Naive thymus-derived CD4-positive, alpha-beta T cell (primary cell): ENCODE measurements at regions of chr17 and their contacts with region 1.

Region 1: DNA sequence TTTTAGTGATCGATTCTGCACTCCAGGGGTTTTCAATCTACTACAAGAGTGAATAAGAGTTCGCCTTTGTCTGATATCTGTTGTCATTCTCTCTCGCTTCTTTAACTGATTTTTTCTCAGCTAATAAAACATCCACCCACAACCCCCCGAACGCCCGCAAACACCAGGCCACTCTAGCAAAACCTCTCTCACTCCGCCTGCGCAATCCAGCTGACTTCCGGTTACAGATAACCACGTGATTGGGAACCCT is 338 bp upstream of the RPL19 start:
- DNase-seq: peak in 7 of 9 donors; percentile 61 to 93 (median 89)
- ATAC-seq: peak; percentile 85
- H3K4me3 ChIP-seq: peak overlapping the region; percentile 83
- H3K4me3 Mint-ChIP-seq: peak overlapping the region; percentile 87 to 98 (median 92)
- H3K27ac ChIP-seq: peak overlapping the region; percentile 98
- H3K27ac Mint-ChIP-seq: peak overlapping the region; percentile 93 to 100 (median 99)
- H3K4me1 ChIP-seq: peaks cover 42 to 46% of the 10 kb centered on the region in 2 donors
- H3K4me1 Mint-ChIP-seq: peaks cover 38 to 72% (median 54%) of the 10 kb centered on the region in 7 donors
- H3K27me3 ChIP-seq: no peaks in the 10 kb centered on the region
- H3K27me3 Mint-ChIP-seq: no peaks in the 10 kb centered on the region

Region 2: GRCh38 chr17:39126436-39126835 is 73.3 kb before region 1 on chr17:
- CTCF ChIA-PET with region 1: no interaction called
- POLR2A ChIA-PET with region 1: no interaction called
- intact Hi-C with region 1: no loop called
- DNase-seq: no peak
- ATAC-seq: no peak
- H3K4me3 ChIP-seq: no peak overlapping the region
- H3K4me3 Mint-ChIP-seq: no peak overlapping the region
- H3K27ac ChIP-seq: no peak overlapping the region
- H3K27ac Mint-ChIP-seq: no peak overlapping the region
- H3K4me1 ChIP-seq: no peaks in the 10 kb centered on the region
- H3K4me1 Mint-ChIP-seq: peaks cover 0 to 2% (median 0%) of the 10 kb centered on the region in 7 donors
- H3K27me3 ChIP-seq: no peaks in the 10 kb centered on the region
- H3K27me3 Mint-ChIP-seq: no peaks in the 10 kb centered on the region

Region 3: GRCh38 chr17:39235555-39236449 is 36.1 kb after region 1 on chr17:
- CTCF ChIA-PET with region 1: interaction called, 285 read pairs
- POLR2A ChIA-PET with region 1: interaction called, 144 read pairs
- intact Hi-C with region 1: no loop called
- DNase-seq: peak in 7 of 9 donors; percentile 35 to 62 (median 51)
- ATAC-seq: peak; percentile 57
- H3K4me3 ChIP-seq: no peak overlapping the region
- H3K4me3 Mint-ChIP-seq: peak overlapping the region in 4 of 10 donors; percentile 0 to 51 (median 8)
- H3K27ac ChIP-seq: no peak overlapping the region
- H3K27ac Mint-ChIP-seq: peak overlapping the region in 8 of 9 donors; percentile 21 to 89 (median 76)
- H3K4me1 ChIP-seq: peaks cover 33 to 43% of the 10 kb centered on the region in 2 donors
- H3K4me1 Mint-ChIP-seq: peaks cover 20 to 45% (median 40%) of the 10 kb centered on the region in 7 donors
- H3K27me3 ChIP-seq: no peaks in the 10 kb centered on the region
- H3K27me3 Mint-ChIP-seq: peaks cover 0 to 13% (median 9%) of the 10 kb centered on the region in 5 donors

Region 4: DNA sequence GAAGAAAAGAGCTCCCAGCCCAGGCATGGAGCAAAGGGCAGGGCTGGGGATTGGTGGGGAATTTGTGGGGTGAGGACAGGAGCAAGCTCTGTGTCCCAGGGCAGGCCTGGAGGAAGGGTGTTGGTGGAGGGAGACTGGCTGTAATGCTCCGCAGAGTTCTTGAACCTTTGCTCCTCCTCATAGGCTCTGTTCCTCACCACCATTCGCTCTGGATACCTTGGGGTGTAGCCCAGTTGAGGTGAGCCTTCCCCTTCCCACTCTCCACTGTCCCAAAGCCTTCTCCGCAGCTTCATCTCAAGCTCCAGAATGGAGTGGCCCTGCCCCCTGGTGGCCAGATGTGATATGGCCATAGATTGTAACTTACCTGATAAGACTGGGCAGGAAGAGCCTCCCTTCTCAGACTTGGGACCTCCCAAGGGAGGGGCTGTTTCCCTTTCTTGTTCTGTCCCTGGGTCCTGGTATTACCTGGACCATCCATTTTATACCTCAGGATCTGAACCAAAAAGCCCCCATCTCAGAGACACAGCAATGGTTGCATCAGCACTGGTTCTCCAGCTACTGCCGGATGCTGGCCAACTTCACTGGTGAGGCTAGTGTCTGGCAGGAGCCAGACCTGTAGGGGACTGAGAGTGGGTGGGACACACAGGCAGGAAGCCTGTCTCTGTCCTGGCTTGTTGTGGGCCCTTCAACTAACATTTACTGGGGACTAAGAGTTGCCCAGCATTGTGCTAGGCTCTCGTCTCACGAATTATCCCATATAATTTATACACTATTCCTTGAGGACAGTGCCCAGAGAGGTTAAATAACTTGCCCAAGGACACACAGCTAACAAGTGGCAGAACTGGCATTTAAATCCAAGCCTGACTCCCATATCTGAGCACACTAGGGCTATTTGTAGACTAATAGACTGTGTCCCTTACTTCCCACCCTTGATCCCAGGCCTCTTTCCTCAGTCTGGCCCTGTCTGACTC is 45.1 kb after region 1 on chr17:
- CTCF ChIA-PET with region 1: interaction called, 285 read pairs
- POLR2A ChIA-PET with region 1: interaction called, 144 read pairs
- intact Hi-C with region 1: no loop called
- DNase-seq: peak; percentile 74 to 85 (median 81)
- ATAC-seq: peak; percentile 96
- H3K4me3 ChIP-seq: no peak overlapping the region
- H3K4me3 Mint-ChIP-seq: peak overlapping the region in 5 of 10 donors; percentile 12 to 61 (median 38)
- H3K27ac ChIP-seq: no peak overlapping the region
- H3K27ac Mint-ChIP-seq: peak overlapping the region in 6 of 9 donors; percentile 5 to 87 (median 66)
- H3K4me1 ChIP-seq: peaks cover 6 to 10% of the 10 kb centered on the region in 2 donors
- H3K4me1 Mint-ChIP-seq: peaks cover 7 to 16% (median 11%) of the 10 kb centered on the region in 7 donors
- H3K27me3 ChIP-seq: no peaks in the 10 kb centered on the region
- H3K27me3 Mint-ChIP-seq: peaks cover 0 to 4% (median 0%) of the 10 kb centered on the region in 5 donors

Region 5: GRCh38 chr17:39270923-39271322 is 71.2 kb after region 1 on chr17:
- CTCF ChIA-PET with region 1: no interaction called
- POLR2A ChIA-PET with region 1: no interaction called
- intact Hi-C with region 1: no loop called
- DNase-seq: no peak
- ATAC-seq: no peak
- H3K4me3 ChIP-seq: no peak overlapping the region
- H3K4me3 Mint-ChIP-seq: no peak overlapping the region
- H3K27ac ChIP-seq: no peak overlapping the region
- H3K27ac Mint-ChIP-seq: no peak overlapping the region
- H3K4me1 ChIP-seq: no peaks in the 10 kb centered on the region
- H3K4me1 Mint-ChIP-seq: no peaks in the 10 kb centered on the region
- H3K27me3 ChIP-seq: no peaks in the 10 kb centered on the region
- H3K27me3 Mint-ChIP-seq: no peaks in the 10 kb centered on the region